Naive thymus-derived CD4-positive, alpha-beta T cell (primary cell): ENCODE measurements at regions of chr19 and their contacts with region 1.

Region 1: GRCh38 chr19:54266133-54266532 is 9.1 kb upstream of the LILRB5 start:
- DNase-seq: peak in 8 of 9 donors; percentile 34 to 68 (median 50)
- ATAC-seq: peak; percentile 85
- H3K4me3 ChIP-seq: no peak overlapping the region
- H3K4me3 Mint-ChIP-seq: no peak overlapping the region
- H3K27ac ChIP-seq: no peak overlapping the region
- H3K27ac Mint-ChIP-seq: no peak overlapping the region
- H3K4me1 ChIP-seq: no peaks in the 10 kb centered on the region
- H3K4me1 Mint-ChIP-seq: no peaks in the 10 kb centered on the region
- H3K27me3 ChIP-seq: no peaks in the 10 kb centered on the region
- H3K27me3 Mint-ChIP-seq: peaks cover 4 to 24% (median 17%) of the 10 kb centered on the region in 5 donors

Region 2: DNA sequence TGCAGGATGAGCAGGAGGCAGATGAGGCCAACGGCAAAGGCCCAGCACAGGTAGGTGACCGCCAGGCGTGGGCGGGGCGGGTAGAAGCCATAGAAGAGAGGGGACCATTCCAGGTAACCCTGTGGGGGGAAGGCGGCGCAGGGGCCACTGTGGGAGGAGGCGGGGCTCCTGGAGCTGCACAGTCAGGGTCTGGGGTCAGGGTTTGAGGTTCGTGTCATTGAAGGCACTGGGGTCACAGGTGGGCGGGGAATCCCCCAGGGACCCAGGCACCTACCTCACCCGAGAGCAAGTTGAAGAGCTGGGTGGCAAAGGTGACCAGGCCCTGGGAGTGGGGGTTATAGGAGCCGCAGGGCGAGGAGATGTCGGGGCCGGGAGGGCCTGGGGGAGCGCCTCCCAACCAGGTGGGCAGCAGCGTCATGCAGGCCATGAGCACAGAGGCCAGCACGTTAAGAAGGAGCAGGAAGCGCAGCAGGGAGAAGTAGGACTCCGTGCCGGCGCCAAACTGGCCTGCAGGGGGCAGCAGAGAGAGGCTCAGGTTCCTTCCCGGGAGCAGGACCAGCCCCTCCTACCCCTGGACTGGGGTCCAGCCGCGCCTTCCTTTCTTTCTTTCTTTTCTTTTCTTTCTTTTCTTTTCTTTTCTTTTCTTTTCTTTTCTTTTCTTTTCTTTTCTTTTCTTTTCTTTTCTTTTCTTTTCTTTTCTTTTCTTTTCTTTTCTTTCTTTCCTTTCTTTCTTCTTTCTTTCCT is 97.8 kb before region 1 on chr19:
- CTCF ChIA-PET with region 1: interaction called, 7 read pairs
- POLR2A ChIA-PET with region 1: no interaction called
- intact Hi-C with region 1: loop called in 1 of 2 experiments (anchors 1 kb)
- DNase-seq: peak; percentile 66 to 94 (median 82)
- ATAC-seq: peak; percentile 89
- H3K4me3 ChIP-seq: no peak overlapping the region
- H3K4me3 Mint-ChIP-seq: peak overlapping the region in 2 of 10 donors; percentile 8 to 28
- H3K27ac ChIP-seq: no peak overlapping the region
- H3K27ac Mint-ChIP-seq: no peak overlapping the region
- H3K4me1 ChIP-seq: peaks cover 4 to 12% of the 10 kb centered on the region in 2 donors
- H3K4me1 Mint-ChIP-seq: peaks cover 10 to 25% (median 17%) of the 10 kb centered on the region in 7 donors
- H3K27me3 ChIP-seq: no peaks in the 10 kb centered on the region
- H3K27me3 Mint-ChIP-seq: no peaks in the 10 kb centered on the region